Endothelial cell of umbilical vein (primary cell): ENCODE measurements at regions of chr4 and their contacts with region 1.

Region 1: DNA sequence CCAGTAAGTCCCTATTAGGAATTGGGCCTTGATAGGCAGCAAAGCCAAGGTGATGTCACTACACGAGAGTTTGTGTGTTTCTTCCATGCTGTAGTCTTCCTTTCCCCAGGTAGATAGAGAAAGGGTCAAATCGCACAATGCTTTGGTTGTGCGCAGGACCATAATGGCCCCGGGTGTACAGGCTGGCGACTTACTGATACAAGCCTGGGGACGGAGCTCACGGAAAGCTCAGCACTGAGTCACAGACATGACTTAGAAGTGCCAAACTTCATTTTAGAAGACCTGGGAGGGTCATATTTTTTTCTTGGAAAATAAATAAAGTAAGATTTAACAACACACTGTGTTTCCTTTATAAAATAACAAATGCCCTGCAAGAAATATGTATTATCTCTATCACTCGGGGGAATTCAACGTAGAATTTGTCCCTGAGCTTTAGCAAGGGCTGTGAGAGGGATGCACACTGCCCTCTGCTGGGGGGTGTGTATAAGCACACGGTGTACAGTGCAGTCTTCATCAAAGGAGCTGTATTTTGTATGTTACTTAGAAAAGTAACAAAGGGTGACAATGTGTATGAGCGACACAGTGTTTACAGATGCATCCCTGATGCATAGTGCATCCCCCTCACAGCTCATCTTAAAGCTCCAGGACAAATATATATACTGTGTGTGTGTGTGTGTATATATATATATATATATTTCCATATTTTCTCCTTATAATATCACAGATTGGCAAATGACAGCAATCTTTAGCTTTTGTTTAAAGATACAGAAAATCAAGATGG is 254.5 kb upstream of the VEGFC start:
- DNase-seq: peak; percentile 76
- H3K4me3 ChIP-seq: no peak overlapping the region
- H3K27ac ChIP-seq: no peak overlapping the region
- H3K4me1 ChIP-seq: peaks cover 3% of the 10 kb centered on the region
- H3K27me3 ChIP-seq: no peaks in the 10 kb centered on the region
- CTCF ChIP-seq: peak; percentile 77 to 90
- POLR2A ChIP-seq: no peak

Region 2: GRCh38 chr4:176680668-176681180 is 366.5 kb before region 1 on chr4:
- CTCF ChIA-PET with region 1: interaction called, 15 read pairs
- POLR2A ChIA-PET with region 1: no interaction called
- dilution Hi-C with region 1: no loop called
- intact Hi-C with region 1: no loop called
- DNase-seq: no peak
- H3K4me3 ChIP-seq: no peak overlapping the region
- H3K27ac ChIP-seq: no peak overlapping the region
- H3K4me1 ChIP-seq: peaks cover 11% of the 10 kb centered on the region
- H3K27me3 ChIP-seq: no peaks in the 10 kb centered on the region
- CTCF ChIP-seq: no peak
- POLR2A ChIP-seq: no peak

Region 3: GRCh38 chr4:176789955-176790354 is 257.3 kb before region 1 on chr4:
- CTCF ChIA-PET with region 1: interaction called, 151 read pairs
- POLR2A ChIA-PET with region 1: interaction called, 4 read pairs
- dilution Hi-C with region 1: no loop called
- intact Hi-C with region 1: loop called (anchors 1 kb)
- DNase-seq: peak; percentile 81
- H3K4me3 ChIP-seq: peak overlapping the region in 2 of 3 experiments; percentile 99 to 100
- H3K27ac ChIP-seq: peak overlapping the region; percentile 23
- H3K4me1 ChIP-seq: peaks cover 39% of the 10 kb centered on the region
- H3K27me3 ChIP-seq: no peaks in the 10 kb centered on the region
- CTCF ChIP-seq: peak; percentile 59 to 60
- POLR2A ChIP-seq: no peak

Region 4: DNA sequence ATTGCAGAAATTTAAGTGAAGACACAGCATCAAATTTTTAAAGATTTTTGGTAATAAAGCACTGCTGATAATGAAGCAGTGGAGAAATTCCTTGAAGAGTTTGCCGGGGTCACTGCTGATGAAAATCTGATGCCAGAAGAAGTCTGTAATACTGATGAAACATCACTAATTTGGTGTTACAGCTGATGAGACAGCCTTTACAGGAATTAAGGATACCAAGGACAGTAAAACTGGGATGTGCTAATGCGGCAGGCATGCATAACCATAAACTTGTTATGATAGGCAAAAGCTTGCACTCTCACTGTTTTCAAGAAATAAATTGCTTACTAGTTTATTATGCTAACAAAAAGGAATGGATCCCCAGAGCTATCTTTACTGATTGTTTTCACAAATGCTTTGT is 201.6 kb before region 1 on chr4:
- CTCF ChIA-PET with region 1: interaction called, 12 read pairs
- POLR2A ChIA-PET with region 1: no interaction called
- dilution Hi-C with region 1: no loop called
- intact Hi-C with region 1: no loop called
- DNase-seq: no peak
- H3K4me3 ChIP-seq: no peak overlapping the region
- H3K27ac ChIP-seq: no peak overlapping the region
- H3K4me1 ChIP-seq: peaks cover 32% of the 10 kb centered on the region
- H3K27me3 ChIP-seq: no peaks in the 10 kb centered on the region
- CTCF ChIP-seq: no peak
- POLR2A ChIP-seq: no peak

Region 5: DNA sequence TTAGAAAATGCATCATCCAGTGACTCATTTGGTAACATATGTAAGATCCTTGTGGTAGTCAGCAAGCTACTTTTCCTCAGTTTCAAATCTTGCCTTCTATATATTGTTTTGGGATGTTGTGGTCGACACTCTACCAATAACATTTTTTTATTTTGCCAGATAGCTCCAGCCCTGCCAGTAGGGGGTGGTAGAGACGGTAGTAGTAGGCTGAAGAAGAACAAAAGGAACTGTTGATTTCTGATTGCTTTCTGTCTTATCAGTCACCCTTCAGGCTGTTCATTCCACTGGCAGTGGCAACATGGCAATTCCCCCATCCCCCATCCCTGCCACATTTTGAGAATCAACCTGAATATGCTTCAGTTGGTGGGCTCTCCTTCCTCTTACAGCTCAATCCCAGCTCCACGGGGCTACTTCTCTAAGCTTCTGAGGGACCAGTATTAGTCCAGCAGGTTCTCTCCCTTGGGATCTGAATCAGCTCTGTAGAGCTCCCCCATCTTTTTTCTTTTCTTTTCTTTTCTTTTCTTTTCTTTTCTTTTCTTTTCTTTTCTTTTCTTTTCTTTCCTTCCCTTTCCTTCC is 83.1 kb before region 1 on chr4:
- CTCF ChIA-PET with region 1: interaction called, 24 read pairs
- POLR2A ChIA-PET with region 1: no interaction called
- dilution Hi-C with region 1: no loop called
- intact Hi-C with region 1: no loop called
- DNase-seq: no peak
- H3K4me3 ChIP-seq: no peak overlapping the region
- H3K27ac ChIP-seq: no peak overlapping the region
- H3K4me1 ChIP-seq: no peaks in the 10 kb centered on the region
- H3K27me3 ChIP-seq: no peaks in the 10 kb centered on the region
- CTCF ChIP-seq: peak; percentile 12 to 16
- POLR2A ChIP-seq: no peak

Region 6: GRCh38 chr4:177033135-177033534 is 14.1 kb before region 1 on chr4:
- CTCF ChIA-PET with region 1: interaction called, 20 read pairs
- POLR2A ChIA-PET with region 1: interaction called, 4 read pairs
- dilution Hi-C with region 1: no loop called
- intact Hi-C with region 1: no loop called
- DNase-seq: no peak
- H3K4me3 ChIP-seq: no peak overlapping the region
- H3K27ac ChIP-seq: no peak overlapping the region
- H3K4me1 ChIP-seq: no peaks in the 10 kb centered on the region
- H3K27me3 ChIP-seq: no peaks in the 10 kb centered on the region
- CTCF ChIP-seq: no peak
- POLR2A ChIP-seq: no peak

Region 7: GRCh38 chr4:177532358-177532757 is 485.1 kb after region 1 on chr4:
- CTCF ChIA-PET with region 1: no interaction called
- POLR2A ChIA-PET with region 1: no interaction called
- dilution Hi-C with region 1: no loop called
- intact Hi-C with region 1: no loop called
- DNase-seq: no peak
- H3K4me3 ChIP-seq: no peak overlapping the region
- H3K27ac ChIP-seq: no peak overlapping the region
- H3K4me1 ChIP-seq: no peaks in the 10 kb centered on the region
- H3K27me3 ChIP-seq: no peaks in the 10 kb centered on the region
- CTCF ChIP-seq: no peak
- POLR2A ChIP-seq: no peak